Endothelial cell of umbilical vein (primary cell): ENCODE measurements at regions of chr2 and their contacts with region 1.

Region 1: DNA sequence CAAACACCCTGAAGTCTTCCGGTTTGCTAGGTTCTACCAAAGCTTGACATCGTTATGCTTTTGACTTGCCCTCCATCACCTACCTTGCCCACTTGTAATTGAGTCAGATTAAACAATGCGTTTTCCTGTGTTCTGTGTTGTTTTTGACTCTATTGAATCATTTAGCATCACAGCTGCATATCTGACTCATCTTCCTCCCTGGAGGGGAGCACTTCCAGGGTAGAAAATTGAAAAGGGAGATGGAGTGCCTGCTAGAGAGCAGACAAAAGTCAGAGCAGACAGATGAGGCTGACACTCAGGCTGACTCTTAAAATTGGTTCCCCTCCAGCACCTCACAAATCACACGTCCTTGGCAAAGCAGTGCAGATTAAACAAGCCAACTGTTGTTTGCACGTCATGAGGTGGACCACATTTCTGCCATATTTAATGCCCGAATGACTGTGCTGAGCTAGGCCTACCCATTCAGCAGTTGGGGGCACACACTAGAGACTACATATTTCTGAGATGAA is 2.2 kb downstream of the MPP4 start:
- DNase-seq: peak; percentile 95
- H3K4me3 ChIP-seq: no peak overlapping the region
- H3K27ac ChIP-seq: peak overlapping the region; percentile 96
- H3K4me1 ChIP-seq: peaks cover 61% of the 10 kb centered on the region
- H3K27me3 ChIP-seq: no peaks in the 10 kb centered on the region
- CTCF ChIP-seq: no peak
- POLR2A ChIP-seq: peak; percentile 43

Region 2: GRCh38 chr2:200888704-200889625 is 807.2 kb before region 1 on chr2 and contains the starts of genes NIF3L1 and PPIL3:
- CTCF ChIA-PET with region 1: no interaction called
- POLR2A ChIA-PET with region 1: no interaction called
- dilution Hi-C with region 1: no loop called
- intact Hi-C with region 1: loop called (anchors 2 kb)
- DNase-seq: peak; percentile 96
- H3K4me3 ChIP-seq: peak within 1 kb of the TSS; percentile 24 to 76 (median 63)
- H3K27ac ChIP-seq: peak within 1 kb of the TSS; percentile 91
- H3K4me1 ChIP-seq: peaks cover 13% of the 10 kb centered on the region
- H3K27me3 ChIP-seq: no peaks in the 10 kb centered on the region
- CTCF ChIP-seq: peak in 1 of 2 donors; percentile 11
- POLR2A ChIP-seq: peak; percentile 82
- total RNA-seq, gene NIF3L1: 14.9 and 16.3 TPM in 2 replicates
- total RNA-seq, gene PPIL3: 25.0 and 28.7 TPM in 2 replicates

Region 3: DNA sequence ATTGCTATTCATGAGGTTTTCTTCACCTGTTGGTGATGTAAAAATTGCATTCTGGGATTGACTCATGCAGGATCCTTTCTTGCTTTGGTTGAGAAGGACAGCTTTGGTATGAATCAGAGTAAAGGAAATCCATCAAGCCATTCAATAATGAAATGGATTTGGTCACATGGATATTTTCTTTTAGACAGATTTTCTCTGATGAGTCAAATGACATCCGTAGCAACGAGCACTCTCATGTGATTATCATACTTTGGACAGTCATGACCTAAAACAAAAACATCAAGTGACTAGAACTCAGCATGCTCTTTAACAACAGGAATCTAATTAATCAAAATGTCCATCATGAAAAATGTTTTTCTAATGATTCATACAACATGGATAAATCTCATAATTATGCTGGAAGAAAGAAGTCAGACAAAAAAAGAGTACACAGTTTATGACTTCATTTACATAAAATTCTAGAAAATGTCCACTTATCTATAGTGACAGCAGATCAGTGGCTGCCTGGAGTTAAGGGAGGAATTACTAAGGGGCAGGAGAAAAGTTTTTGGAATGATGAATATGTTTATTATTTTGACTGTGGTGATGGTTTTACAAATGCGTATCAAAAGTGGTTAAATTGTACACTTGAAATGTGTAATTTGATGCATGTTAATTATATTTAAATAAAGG is 275.6 kb before region 1 on chr2:
- CTCF ChIA-PET with region 1: no interaction called
- POLR2A ChIA-PET with region 1: no interaction called
- dilution Hi-C with region 1: no loop called
- intact Hi-C with region 1: loop called (anchors 2 kb)
- DNase-seq: peak; percentile 91
- H3K4me3 ChIP-seq: no peak overlapping the region
- H3K27ac ChIP-seq: peak overlapping the region; percentile 51
- H3K4me1 ChIP-seq: peaks cover 42% of the 10 kb centered on the region
- H3K27me3 ChIP-seq: no peaks in the 10 kb centered on the region
- CTCF ChIP-seq: no peak
- POLR2A ChIP-seq: no peak

Region 4: GRCh38 chr2:201551901-201552300 is 144.3 kb before region 1 on chr2:
- CTCF ChIA-PET with region 1: no interaction called
- POLR2A ChIA-PET with region 1: no interaction called
- dilution Hi-C with region 1: no loop called
- intact Hi-C with region 1: no loop called
- DNase-seq: no peak
- H3K4me3 ChIP-seq: no peak overlapping the region
- H3K27ac ChIP-seq: no peak overlapping the region
- H3K4me1 ChIP-seq: no peaks in the 10 kb centered on the region
- H3K27me3 ChIP-seq: no peaks in the 10 kb centered on the region
- CTCF ChIP-seq: no peak
- POLR2A ChIP-seq: no peak

Region 5: GRCh38 chr2:201654616-201655384 is 41.4 kb before region 1 on chr2:
- CTCF ChIA-PET with region 1: interaction called, 10 read pairs
- POLR2A ChIA-PET with region 1: interaction called, 4 read pairs
- dilution Hi-C with region 1: no loop called
- intact Hi-C with region 1: loop called (anchors 1 kb)
- DNase-seq: peak; percentile 89
- H3K4me3 ChIP-seq: peak overlapping the region in 1 of 3 experiments; percentile 24
- H3K27ac ChIP-seq: peak overlapping the region; percentile 94
- H3K4me1 ChIP-seq: peaks cover 31% of the 10 kb centered on the region
- H3K27me3 ChIP-seq: no peaks in the 10 kb centered on the region
- CTCF ChIP-seq: no peak
- POLR2A ChIP-seq: peak; percentile 30

Region 6: GRCh38 chr2:201707753-201708152 is 11.5 kb after region 1 on chr2:
- CTCF ChIA-PET with region 1: interaction called, 32 read pairs
- POLR2A ChIA-PET with region 1: no interaction called
- dilution Hi-C with region 1: no loop called
- intact Hi-C with region 1: loop called (anchors 1 kb)
- DNase-seq: peak; percentile 67
- H3K4me3 ChIP-seq: no peak overlapping the region
- H3K27ac ChIP-seq: peak overlapping the region; percentile 10
- H3K4me1 ChIP-seq: peaks cover 28% of the 10 kb centered on the region
- H3K27me3 ChIP-seq: no peaks in the 10 kb centered on the region
- CTCF ChIP-seq: peak; percentile 17 to 38
- POLR2A ChIP-seq: no peak

Region 7: DNA sequence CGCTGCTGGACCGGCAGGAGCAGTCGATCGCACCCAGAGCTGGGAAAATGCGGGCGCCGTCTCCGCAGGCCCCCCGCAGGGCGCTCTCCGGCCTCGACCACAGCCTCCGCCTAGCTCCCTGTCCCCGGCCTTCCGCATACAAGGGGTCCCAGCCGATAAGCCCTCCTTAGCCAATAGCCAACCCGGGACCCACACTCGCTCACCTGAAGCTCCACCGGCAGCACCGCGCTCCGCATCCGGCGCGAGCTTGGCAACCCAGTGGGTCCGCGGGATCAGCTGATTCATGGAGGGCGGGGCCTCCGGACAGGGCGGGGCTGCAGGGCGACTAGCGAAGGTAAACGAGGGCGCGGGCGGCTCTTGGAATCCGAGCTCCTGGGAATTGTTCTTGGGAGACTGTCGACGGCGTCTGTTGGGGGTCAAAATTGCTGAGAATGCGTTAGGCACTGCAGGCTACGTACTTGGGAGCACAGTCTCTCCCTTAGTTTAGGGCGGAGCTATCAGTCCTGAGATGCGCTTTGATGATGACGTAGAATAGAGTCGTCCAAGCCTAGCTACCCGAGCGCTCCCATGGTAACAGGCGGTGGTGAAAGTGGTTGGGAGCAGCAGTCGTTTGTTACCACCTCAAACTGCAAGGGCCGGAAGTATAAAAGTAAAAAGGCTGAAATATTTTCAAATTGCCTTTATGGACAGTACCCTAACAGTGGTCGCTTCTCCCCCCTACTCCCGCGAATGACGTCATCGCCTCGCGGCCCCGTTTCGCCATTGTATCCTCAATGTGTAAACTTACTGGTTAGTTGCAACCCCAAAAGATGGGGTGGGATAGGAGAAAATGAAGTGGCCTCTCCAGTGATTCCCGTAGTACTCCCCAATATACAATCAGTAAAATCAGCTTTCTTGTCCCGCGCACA is 84.7 kb after region 1 on chr2 and contains the start of gene ALS2:
- CTCF ChIA-PET with region 1: no interaction called
- POLR2A ChIA-PET with region 1: no interaction called
- dilution Hi-C with region 1: no loop called
- intact Hi-C with region 1: loop called (anchors 2 kb)
- DNase-seq: peak; percentile 99
- H3K4me3 ChIP-seq: peak within 1 kb of the TSS; percentile 49 to 90 (median 79)
- H3K27ac ChIP-seq: peak within 1 kb of the TSS; percentile 14
- H3K4me1 ChIP-seq: peaks cover 32% of the 10 kb centered on the region
- H3K27me3 ChIP-seq: peaks cover 0 to 10% of the 10 kb centered on the region in 2 experiments
- CTCF ChIP-seq: no peak
- POLR2A ChIP-seq: peak; percentile 89
- total RNA-seq, gene ALS2: 34.6 and 36.1 TPM in 2 replicates